ENCODE measurements at regions of chr20 and their contacts with region 1.

Region 1: GRCh38 chr20:44979090-44979621 is 12.8 kb downstream of the STK4 start:
- DNase-seq: peak; percentile 27 to 91 (median 80)
- ATAC-seq: peak; percentile 80 to 90
- H3K4me3 Mint-ChIP-seq: peak overlapping the region; percentile 72 to 87 (median 82)
- H3K27ac Mint-ChIP-seq: peak overlapping the region; percentile 93 to 98 (median 97)
- H3K4me1 Mint-ChIP-seq: peaks cover 38 to 91% (median 84%) of the 10 kb centered on the region in 4 donors
- H3K27me3 Mint-ChIP-seq: no peaks in the 10 kb centered on the region

Region 2: GRCh38 chr20:44960103-44960852 is 18.9 kb before region 1 on chr20 and contains the start of gene TOMM34:
- POLR2A ChIA-PET with region 1: interaction called, 196 read pairs
- DNase-seq: peak; percentile 86 to 96 (median 91)
- ATAC-seq: peak; percentile 94 to 96
- H3K4me3 Mint-ChIP-seq: peak within 1 kb of the TSS; percentile 83 to 100 (median 98)
- H3K27ac Mint-ChIP-seq: peak within 1 kb of the TSS; percentile 89 to 98 (median 96)
- H3K4me1 Mint-ChIP-seq: peaks cover 32 to 68% (median 58%) of the 10 kb centered on the region in 4 donors
- H3K27me3 Mint-ChIP-seq: no peaks in the 10 kb centered on the region
- polyA plus RNA-seq, gene TOMM34: 12.7 to 27.2 (median 14.5) TPM

Region 3: GRCh38 chr20:44990425-44990824 is 11.3 kb after region 1 on chr20:
- POLR2A ChIA-PET with region 1: interaction called, 15 read pairs
- DNase-seq: peak in 1 of 10 donors; percentile 13
- ATAC-seq: peak; percentile 55 to 68
- H3K4me3 Mint-ChIP-seq: peak overlapping the region; percentile 66 to 88 (median 84)
- H3K27ac Mint-ChIP-seq: peak overlapping the region; percentile 83 to 97 (median 92)
- H3K4me1 Mint-ChIP-seq: peaks cover 32 to 79% (median 70%) of the 10 kb centered on the region in 4 donors
- H3K27me3 Mint-ChIP-seq: no peaks in the 10 kb centered on the region